Psoas muscle (tissue), 8 donors: ENCODE measurements at regions of chr9 and their contacts with region 1.

Region 1: GRCh38 chr9:84935528-84936117 is 266.1 kb downstream of the NTRK2 start:
- DNase-seq: no peak
- ATAC-seq: no peak
- H3K4me3 ChIP-seq: no peak overlapping the region
- H3K27ac ChIP-seq: no peak overlapping the region
- H3K4me1 ChIP-seq: no peaks in the 10 kb centered on the region
- H3K27me3 ChIP-seq: no peaks in the 10 kb centered on the region
- CTCF ChIP-seq: no peak

Region 2: GRCh38 chr9:84959339-84959738 is 23.7 kb after region 1 on chr9:
- intact Hi-C with region 1: loop called in 1 of 2 experiments (anchors 2 kb)
- DNase-seq: no peak
- ATAC-seq: no peak
- H3K4me3 ChIP-seq: no peak overlapping the region
- H3K27ac ChIP-seq: no peak overlapping the region
- H3K4me1 ChIP-seq: no peaks in the 10 kb centered on the region
- H3K27me3 ChIP-seq: peaks cover 0 to 3% (median 0%) of the 10 kb centered on the region in 3 donors
- CTCF ChIP-seq: no peak

Region 3: DNA sequence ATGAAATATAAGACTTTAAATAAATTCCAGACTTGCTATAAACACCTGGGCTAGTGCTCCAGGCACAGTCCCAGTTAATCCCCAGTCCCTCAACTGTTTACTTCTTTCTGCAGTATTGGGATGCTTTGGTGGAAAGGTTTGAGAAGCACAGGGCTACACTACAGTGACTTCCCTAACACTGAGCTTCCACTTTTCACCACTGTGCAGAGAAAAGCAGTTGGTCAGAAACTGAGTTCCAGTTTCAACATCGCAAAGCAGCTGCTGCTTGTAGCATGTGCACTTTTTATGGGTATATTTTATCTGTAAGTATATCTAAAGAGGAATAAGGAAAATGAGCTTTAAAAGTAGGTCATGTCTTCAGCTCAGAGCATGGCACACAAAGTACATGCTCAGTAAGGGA is 73.6 kb after region 1 on chr9:
- intact Hi-C with region 1: no loop called
- DNase-seq: no peak
- ATAC-seq: no peak
- H3K4me3 ChIP-seq: no peak overlapping the region
- H3K27ac ChIP-seq: no peak overlapping the region
- H3K4me1 ChIP-seq: no peaks in the 10 kb centered on the region
- H3K27me3 ChIP-seq: no peaks in the 10 kb centered on the region
- CTCF ChIP-seq: no peak